ENCODE measurements at regions of chr1 and their contacts with region 1.

Region 1: GRCh38 chr1:30801771-30802198 is 44.2 kb upstream of the LAPTM5 start:
- DNase-seq: peak; percentile 86
- H3K4me3 ChIP-seq: peak overlapping the region in 1 of 2 experiments; percentile 38; a peak in 1 of 4 replicates
- H3K27ac ChIP-seq: no peak overlapping the region
- H3K4me1 ChIP-seq: peaks cover 12 to 15% of the 10 kb centered on the region in 2 experiments; a peak in 3 of 4 replicates
- H3K27me3 ChIP-seq: no peaks in the 10 kb centered on the region
- CTCF ChIP-seq: peak; percentile 96
- EP300 ChIP-seq: no peak
- RAD21 ChIP-seq: peak; percentile 97

Region 2: GRCh38 chr1:30618335-30618747 is 183.4 kb before region 1 on chr1:
- CTCF ChIA-PET with region 1: no interaction called
- POLR2A ChIA-PET with region 1: no interaction called
- DNase-seq: no peak
- H3K4me3 ChIP-seq: no peak overlapping the region
- H3K27ac ChIP-seq: no peak overlapping the region
- H3K4me1 ChIP-seq: no peaks in the 10 kb centered on the region
- H3K27me3 ChIP-seq: no peaks in the 10 kb centered on the region
- CTCF ChIP-seq: no peak
- EP300 ChIP-seq: no peak
- RAD21 ChIP-seq: no peak

Region 3: DNA sequence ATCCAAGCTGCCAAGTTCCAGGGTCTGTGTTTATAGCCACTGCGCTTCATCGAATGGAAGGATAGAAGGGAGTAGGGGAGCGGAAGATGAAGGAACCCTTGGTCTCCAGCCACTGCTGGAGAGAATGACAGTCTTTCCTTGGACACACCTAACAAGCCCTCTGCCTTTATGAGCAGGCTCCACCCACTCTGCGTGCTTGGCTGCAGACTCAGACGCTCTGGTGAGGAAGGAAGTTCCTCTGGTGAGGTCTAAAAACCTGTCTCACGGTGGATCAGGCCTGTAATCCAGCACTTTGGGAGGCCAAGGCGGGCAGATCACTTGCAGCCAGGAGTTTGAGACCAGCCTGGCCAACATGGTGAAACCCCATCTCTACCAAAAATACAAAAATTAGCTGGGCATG is 133.8 kb before region 1 on chr1:
- CTCF ChIA-PET with region 1: no interaction called
- POLR2A ChIA-PET with region 1: no interaction called
- DNase-seq: no peak
- H3K4me3 ChIP-seq: no peak overlapping the region
- H3K27ac ChIP-seq: no peak overlapping the region
- H3K4me1 ChIP-seq: peaks cover 0 to 11% of the 10 kb centered on the region in 2 experiments; a peak in 1 of 4 replicates
- H3K27me3 ChIP-seq: no peaks in the 10 kb centered on the region
- CTCF ChIP-seq: no peak
- EP300 ChIP-seq: no peak
- RAD21 ChIP-seq: no peak

Region 4: DNA sequence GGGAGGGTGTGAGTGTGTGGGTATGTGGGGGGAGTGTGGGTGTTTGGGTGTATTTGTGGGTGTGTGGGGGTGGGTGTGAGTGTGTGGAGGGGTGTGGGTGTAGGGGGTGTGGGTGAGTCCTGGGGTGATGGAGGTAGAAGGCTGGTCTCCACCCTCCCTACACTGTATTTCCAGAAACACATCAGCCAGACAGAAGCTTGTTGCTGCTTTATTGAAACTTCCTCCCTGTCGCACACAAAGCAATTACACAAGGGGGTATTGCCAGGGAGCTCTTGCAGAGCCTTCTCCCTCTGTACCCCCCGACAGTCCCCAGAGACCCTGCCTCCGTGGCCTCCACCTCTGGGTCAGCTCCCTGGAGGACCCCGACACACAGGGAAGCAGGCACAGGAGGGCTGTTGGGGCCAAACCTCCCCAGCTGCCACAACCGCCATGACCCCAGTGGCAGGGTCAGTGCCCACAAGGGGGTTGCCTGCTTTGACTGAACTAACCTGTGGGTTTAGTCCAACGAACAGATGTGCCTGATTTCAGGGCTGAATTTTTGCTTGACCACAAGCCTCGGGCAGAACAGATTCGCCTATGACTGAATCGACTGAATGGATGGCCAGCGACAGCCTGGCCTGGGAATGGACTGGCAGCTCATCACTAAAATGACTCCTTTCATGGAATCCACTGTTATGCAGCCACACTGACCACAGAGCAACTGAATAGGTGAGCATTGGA is 69.3 kb before region 1 on chr1:
- CTCF ChIA-PET with region 1: interaction called, 11 read pairs
- POLR2A ChIA-PET with region 1: no interaction called
- DNase-seq: no peak
- H3K4me3 ChIP-seq: no peak overlapping the region
- H3K27ac ChIP-seq: no peak overlapping the region
- H3K4me1 ChIP-seq: peaks cover 6% of the 10 kb centered on the region in 2 experiments; a peak in 3 of 4 replicates
- H3K27me3 ChIP-seq: no peaks in the 10 kb centered on the region
- CTCF ChIP-seq: no peak
- EP300 ChIP-seq: no peak
- RAD21 ChIP-seq: no peak

Region 5: DNA sequence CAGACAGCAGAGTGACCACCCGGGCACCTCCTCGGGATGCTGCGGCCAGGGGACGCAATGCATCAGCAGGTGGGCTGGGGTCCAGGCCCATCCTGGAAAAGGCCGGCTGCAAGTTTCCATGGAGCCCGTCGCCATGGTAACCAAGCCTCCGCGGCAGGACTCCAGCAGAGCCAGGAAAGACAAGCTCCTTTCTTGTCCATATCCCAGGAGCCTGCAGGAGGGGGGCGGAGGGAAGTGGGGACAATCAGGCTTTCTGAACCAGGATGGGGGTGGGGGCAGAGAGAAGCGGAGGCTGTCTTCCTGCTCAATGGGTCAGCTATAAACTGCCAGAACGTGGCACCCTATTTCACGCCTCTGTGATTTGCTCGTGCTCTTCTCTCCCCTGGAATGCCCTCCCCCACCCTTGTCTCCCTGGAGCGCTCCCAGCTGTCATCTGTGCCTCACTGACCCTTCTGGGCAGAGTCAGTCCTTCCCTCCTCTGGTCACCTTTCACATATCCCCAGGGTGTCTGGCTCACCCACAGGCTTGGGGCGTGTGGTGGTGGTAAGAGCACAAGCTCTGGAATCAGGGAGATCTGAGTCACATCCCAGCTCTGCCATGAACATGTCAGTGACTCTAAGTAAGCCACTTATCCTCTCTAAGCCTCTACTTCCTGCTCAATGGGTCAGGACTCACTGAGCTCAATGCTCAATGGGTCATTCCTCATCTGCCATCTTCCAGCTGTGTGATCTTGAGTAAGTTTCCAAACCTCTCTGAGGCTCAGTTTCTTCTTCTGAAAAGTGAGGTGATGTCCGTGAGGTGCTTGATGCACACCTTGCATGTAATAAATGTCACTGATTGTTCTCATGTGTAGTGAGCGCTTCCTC is 14.7 kb after region 1 on chr1:
- CTCF ChIA-PET with region 1: interaction called, 118 read pairs
- POLR2A ChIA-PET with region 1: no interaction called
- DNase-seq: peak; percentile 84
- H3K4me3 ChIP-seq: no peak overlapping the region; a peak in 1 of 4 replicates
- H3K27ac ChIP-seq: peak overlapping the region in 1 of 2 experiments; percentile 52; a peak in 2 of 4 replicates
- H3K4me1 ChIP-seq: peaks cover 14 to 32% of the 10 kb centered on the region in 2 experiments; a peak in 3 of 4 replicates
- H3K27me3 ChIP-seq: no peaks in the 10 kb centered on the region
- CTCF ChIP-seq: no peak
- EP300 ChIP-seq: no peak
- RAD21 ChIP-seq: no peak

Region 6: DNA sequence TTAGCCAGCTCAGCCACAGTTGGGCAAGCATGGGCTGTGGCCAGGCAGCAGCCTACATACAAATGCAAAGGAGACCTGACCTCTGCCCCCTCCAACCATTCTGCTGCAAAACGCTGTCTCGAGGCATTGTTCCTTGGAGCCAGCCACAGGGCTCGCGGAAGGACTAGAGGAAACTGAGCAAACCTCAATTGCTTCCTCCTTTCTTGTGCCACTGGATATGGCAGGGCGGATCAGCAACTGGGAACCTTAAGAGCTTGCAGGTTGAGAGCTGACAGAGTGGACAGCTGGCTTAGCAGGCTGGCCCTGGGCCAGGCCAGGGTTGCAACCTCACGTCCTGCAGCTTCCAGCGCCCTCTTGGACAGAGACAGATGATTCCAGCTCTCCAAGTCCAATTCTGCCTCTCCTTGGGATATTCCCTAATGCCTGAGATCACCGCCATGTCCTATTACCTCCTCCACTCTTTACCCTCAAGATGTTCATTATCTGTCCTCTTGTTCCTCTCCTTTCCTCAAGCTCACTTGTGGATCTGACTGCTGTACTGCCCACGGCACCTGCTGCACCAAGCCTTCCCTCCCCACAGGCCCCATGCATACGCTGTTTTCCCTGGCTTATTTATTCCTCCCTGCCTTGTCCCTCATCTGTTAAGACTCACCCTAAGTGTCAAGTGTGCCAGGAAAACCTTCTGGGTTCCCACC is 39.3 kb after region 1 on chr1:
- CTCF ChIA-PET with region 1: interaction called, 28 read pairs
- POLR2A ChIA-PET with region 1: no interaction called
- DNase-seq: no peak
- H3K4me3 ChIP-seq: no peak overlapping the region
- H3K27ac ChIP-seq: no peak overlapping the region
- H3K4me1 ChIP-seq: peaks cover 0 to 8% of the 10 kb centered on the region in 2 experiments; a peak in 1 of 4 replicates
- H3K27me3 ChIP-seq: no peaks in the 10 kb centered on the region
- CTCF ChIP-seq: no peak
- EP300 ChIP-seq: no peak
- RAD21 ChIP-seq: peak; percentile 15; the same call in 1 of the 2 replicates

Region 7: GRCh38 chr1:30868833-30869435 is 67.1 kb after region 1 on chr1:
- CTCF ChIA-PET with region 1: interaction called, 13 read pairs
- POLR2A ChIA-PET with region 1: no interaction called
- DNase-seq: no peak
- H3K4me3 ChIP-seq: no peak overlapping the region
- H3K27ac ChIP-seq: no peak overlapping the region
- H3K4me1 ChIP-seq: no peaks in the 10 kb centered on the region
- H3K27me3 ChIP-seq: no peaks in the 10 kb centered on the region
- CTCF ChIP-seq: no peak
- EP300 ChIP-seq: no peak
- RAD21 ChIP-seq: no peak

Region 8: DNA sequence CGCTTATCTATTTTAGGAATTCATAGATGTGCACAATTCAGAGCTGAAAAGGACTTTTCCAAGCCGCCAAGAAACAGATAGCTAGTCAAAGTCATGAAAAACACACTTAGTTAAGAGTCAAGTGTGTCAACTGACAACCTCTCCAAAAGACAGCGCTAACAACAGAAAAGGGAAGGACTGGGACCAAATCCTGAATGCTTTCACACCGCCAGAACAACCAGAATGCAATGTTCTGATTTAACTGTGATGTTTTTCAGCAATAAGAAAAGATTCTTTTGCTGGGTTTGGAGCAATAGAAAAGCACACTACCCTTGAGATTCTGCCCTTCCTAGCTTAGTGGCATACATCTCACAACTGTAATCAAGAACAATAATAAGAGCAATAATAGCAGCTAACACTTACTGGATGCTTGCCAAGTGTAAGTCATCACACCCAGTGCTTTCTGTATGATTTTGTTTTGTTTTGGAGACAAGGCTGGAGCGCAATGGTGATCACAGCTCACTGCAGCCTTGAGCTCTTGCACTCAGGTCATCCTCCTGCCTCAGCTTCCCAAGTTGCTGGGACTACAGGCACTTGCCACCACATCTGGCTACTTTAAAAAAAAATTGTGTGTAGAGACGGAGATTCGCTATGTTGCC is 140.7 kb after region 1 on chr1:
- CTCF ChIA-PET with region 1: interaction called, 12 read pairs
- POLR2A ChIA-PET with region 1: no interaction called
- DNase-seq: no peak
- H3K4me3 ChIP-seq: no peak overlapping the region
- H3K27ac ChIP-seq: no peak overlapping the region
- H3K4me1 ChIP-seq: no peaks in the 10 kb centered on the region
- H3K27me3 ChIP-seq: no peaks in the 10 kb centered on the region
- CTCF ChIP-seq: no peak
- EP300 ChIP-seq: no peak
- RAD21 ChIP-seq: no peak

Region 9: DNA sequence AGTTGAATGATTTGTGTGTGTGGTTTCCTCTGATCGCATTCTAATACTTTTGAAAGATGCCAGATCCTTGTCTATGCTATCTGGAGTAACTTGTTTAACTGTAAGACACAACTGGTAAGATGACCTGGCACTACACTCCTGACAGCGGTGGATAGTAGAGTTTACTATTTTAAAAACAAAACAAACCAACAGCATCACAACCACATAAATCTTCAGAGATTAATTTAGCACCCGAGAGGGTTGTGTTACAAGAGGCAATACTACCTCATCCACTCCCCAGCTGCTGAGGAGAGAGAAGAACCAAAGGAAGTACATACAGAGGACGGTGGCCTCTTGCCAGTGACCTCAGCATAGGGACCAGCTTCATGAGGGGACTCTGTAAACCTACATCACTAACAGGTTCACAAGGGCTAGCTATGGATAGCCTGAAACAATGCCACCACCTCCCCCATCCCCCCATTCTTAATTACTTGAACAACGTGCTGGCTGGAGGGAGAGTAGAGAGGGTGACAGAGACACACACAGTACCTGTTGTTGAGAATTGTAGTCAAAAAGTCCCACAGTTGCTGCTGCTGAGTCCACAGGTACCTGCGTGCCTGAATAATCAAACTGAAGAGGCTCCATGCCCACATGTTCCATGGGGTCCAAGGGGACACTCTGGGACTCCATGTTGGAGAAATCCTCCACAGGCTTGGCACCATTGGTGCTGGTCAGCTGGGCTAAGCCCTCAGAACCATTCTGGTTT is 190.2 kb after region 1 on chr1:
- CTCF ChIA-PET with region 1: no interaction called
- POLR2A ChIA-PET with region 1: no interaction called
- DNase-seq: no peak
- H3K4me3 ChIP-seq: no peak overlapping the region
- H3K27ac ChIP-seq: peak overlapping the region in 1 of 2 experiments; percentile 11; a peak in 1 of 4 replicates
- H3K4me1 ChIP-seq: peaks cover 6 to 30% of the 10 kb centered on the region in 2 experiments
- H3K27me3 ChIP-seq: no peaks in the 10 kb centered on the region
- CTCF ChIP-seq: no peak
- EP300 ChIP-seq: no peak
- RAD21 ChIP-seq: no peak